ENCODE measurements at regions of chr15 and their contacts with region 1.

Region 1: GRCh38 chr15:96273317-96274086 is 57.0 kb upstream of the NR2F2 start:
- DNase-seq: peak; percentile 93 to 99 (median 93)
- ATAC-seq: peak; percentile 98
- H3K4me3 ChIP-seq: no peak overlapping the region
- H3K27ac ChIP-seq: peak overlapping the region; percentile 93
- H3K4me1 ChIP-seq: peaks cover 11 to 30% of the 10 kb centered on the region in 2 experiments
- H3K27me3 ChIP-seq: no peaks in the 10 kb centered on the region
- CTCF ChIP-seq: no peak
- EP300 ChIP-seq: peak; percentile 93
- POLR2A ChIP-seq: no peak
- RAD21 ChIP-seq: peak in 1 of 2 experiments; percentile 16; a peak in 2 of 4 replicates

Region 2: DNA sequence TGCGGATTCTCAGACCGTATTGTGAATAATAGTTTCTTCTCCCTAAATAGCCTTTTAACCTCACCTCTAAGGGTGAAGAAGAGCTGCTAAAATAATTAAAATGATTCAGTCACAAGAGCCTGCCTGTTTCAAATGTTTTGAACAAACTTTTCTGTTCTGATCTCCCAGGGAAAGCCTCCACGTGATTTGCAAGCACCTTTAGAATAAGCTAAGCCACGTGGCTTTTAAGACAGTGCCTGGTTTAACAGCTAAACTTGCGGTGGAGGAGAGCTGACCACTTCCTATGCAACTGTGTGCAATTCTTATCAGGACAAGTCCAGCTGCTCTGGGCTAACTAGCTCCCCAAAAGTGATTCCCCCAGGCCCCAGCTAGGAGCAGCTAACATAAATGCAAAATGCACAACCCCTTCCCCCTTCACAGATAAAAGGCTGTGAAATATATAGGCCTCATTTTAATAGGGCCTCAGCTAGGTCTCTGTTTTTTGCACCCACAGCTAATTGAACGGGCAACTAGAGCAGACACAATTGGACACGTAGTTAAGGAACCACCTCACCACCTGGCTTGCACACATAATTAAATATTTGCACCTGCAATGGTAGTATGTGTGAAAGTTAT is 344.2 kb before region 1 on chr15:
- CTCF ChIA-PET with region 1: no interaction called
- POLR2A ChIA-PET with region 1: no interaction called
- in situ Hi-C with region 1: no loop called
- intact Hi-C with region 1: loop called (anchors 1 kb)
- DNase-seq: peak; percentile 86 to 96 (median 86)
- ATAC-seq: peak; percentile 90
- H3K4me3 ChIP-seq: no peak overlapping the region
- H3K27ac ChIP-seq: peak overlapping the region; percentile 81
- H3K4me1 ChIP-seq: peaks cover 0 to 42% of the 10 kb centered on the region in 2 experiments; a peak in 4 of 5 replicates
- H3K27me3 ChIP-seq: no peaks in the 10 kb centered on the region
- CTCF ChIP-seq: no peak
- EP300 ChIP-seq: peak; percentile 99
- POLR2A ChIP-seq: no peak
- RAD21 ChIP-seq: peak; percentile 57 to 62

Region 3: GRCh38 chr15:96053031-96053780 is 220.3 kb before region 1 on chr15:
- CTCF ChIA-PET with region 1: no interaction called
- POLR2A ChIA-PET with region 1: no interaction called
- in situ Hi-C with region 1: no loop called
- intact Hi-C with region 1: loop called (anchors 5 kb)
- DNase-seq: peak; percentile 31 to 82 (median 35)
- ATAC-seq: peak; percentile 63
- H3K4me3 ChIP-seq: peak overlapping the region; percentile 20
- H3K27ac ChIP-seq: peak overlapping the region; percentile 73
- H3K4me1 ChIP-seq: peaks cover 11 to 35% of the 10 kb centered on the region in 2 experiments
- H3K27me3 ChIP-seq: no peaks in the 10 kb centered on the region
- CTCF ChIP-seq: no peak
- EP300 ChIP-seq: 0 out of 2 replicates have a peak, but pooled peaks have one; percentile 13
- POLR2A ChIP-seq: no peak
- RAD21 ChIP-seq: no peak

Region 4: DNA sequence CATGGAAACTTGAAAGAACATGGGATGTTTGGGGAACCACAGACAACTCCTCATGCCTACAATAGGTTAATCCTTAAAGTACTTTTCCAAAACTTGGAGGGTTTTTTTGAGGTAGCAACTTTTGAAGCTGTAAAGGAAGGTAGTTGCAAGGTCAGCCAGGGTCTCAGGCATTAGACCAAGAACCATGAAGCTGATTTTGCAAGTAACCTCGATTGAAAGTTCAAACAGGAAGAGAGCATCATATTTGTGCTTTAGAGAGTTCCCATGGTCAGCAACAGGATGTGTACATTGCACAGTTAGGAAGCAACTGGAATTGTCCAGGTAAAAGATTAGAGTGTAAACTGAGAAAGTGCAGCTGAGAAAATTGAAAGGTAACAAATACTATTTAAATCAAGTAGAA is 142.8 kb before region 1 on chr15:
- CTCF ChIA-PET with region 1: no interaction called
- POLR2A ChIA-PET with region 1: interaction called, 6 read pairs
- in situ Hi-C with region 1: no loop called
- intact Hi-C with region 1: loop called (anchors 5 kb)
- DNase-seq: no peak
- ATAC-seq: no peak
- H3K4me3 ChIP-seq: no peak overlapping the region
- H3K27ac ChIP-seq: no peak overlapping the region
- H3K4me1 ChIP-seq: peaks cover 0 to 9% of the 10 kb centered on the region in 2 experiments; a peak in 3 of 5 replicates
- H3K27me3 ChIP-seq: no peaks in the 10 kb centered on the region
- CTCF ChIP-seq: no peak
- EP300 ChIP-seq: no peak
- POLR2A ChIP-seq: no peak
- RAD21 ChIP-seq: no peak